HEK293T (cell line): ENCODE measurements at regions of chr11 and their contacts with region 1.

Region 1: DNA sequence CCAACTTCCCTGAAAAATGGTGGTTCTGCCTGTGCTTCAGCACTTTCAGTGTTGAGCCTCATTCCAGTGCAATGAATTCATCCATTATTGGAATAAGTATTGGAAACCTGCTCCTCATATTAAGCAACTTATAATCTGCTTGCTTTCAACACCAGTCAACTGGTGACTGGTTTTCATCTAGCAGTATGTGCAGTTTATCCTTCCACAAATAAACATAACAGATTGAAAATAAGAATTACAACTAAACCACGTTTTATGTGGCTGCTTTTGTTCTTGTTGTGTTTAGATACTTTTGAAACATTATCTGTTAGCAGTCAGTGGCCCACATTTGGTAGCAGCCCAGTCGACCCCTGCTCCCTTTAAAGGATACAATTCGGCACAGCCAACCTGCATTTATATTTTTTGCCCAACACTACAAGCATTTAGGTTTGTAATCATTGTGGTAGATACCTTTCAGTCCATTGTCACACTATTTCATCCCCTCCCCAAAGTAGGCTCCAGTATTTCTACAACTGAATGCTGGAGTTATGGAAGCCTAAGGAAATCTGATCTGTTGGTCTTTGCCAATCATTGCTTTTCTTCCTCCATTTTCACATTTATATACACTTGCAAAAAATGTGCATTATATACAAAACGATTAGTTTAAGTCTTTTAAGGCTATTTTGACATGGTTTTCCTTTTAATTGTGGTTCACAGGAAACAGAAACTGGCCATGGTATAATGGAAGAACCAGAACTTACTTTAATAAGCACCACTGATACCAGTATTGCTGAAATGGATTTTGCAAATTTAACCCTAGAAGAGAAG is 13.1 kb downstream of the TAF1D start:
- DNase-seq: no peak

Region 2: GRCh38 chr11:93741094-93741881 is 13.1 kb after region 1 on chr11 and contains the starts of genes C11orf54 and TAF1D:
- CTCF ChIA-PET with region 1: no interaction called
- POLR2A ChIA-PET with region 1: interaction called, 40 read pairs
- DNase-seq: peak; percentile 87